Adrenal gland (tissue), 19 donors: ENCODE measurements at regions of chr14 and their contacts with region 1.

Region 1: GRCh38 chr14:102029956-102030355 is 56.9 kb downstream of the HSP90AA1 start:
- DNase-seq: no peak
- H3K4me3 ChIP-seq: no peak overlapping the region
- H3K27ac ChIP-seq: no peak overlapping the region
- H3K4me1 ChIP-seq: no peaks in the 10 kb centered on the region
- H3K27me3 ChIP-seq: no peaks in the 10 kb centered on the region
- CTCF ChIP-seq: no peak
- POLR2A ChIP-seq: no peak

Region 2: GRCh38 chr14:101980251-101981099 is 49.5 kb before region 1 on chr14:
- intact Hi-C with region 1: loop called in 1 of 2 experiments (anchors 10 kb)
- DNase-seq: peak; percentile 74 to 93 (median 90)
- H3K4me3 ChIP-seq: no peak overlapping the region
- H3K27ac ChIP-seq: peak overlapping the region; percentile 3 to 79 (median 24)
- H3K4me1 ChIP-seq: peaks cover 8 to 12% of the 10 kb centered on the region in 2 donors
- H3K27me3 ChIP-seq: no peaks in the 10 kb centered on the region
- CTCF ChIP-seq: no peak
- POLR2A ChIP-seq: peak in 1 of 2 donors; percentile 28

Region 3: GRCh38 chr14:102096214-102097114 is 66.5 kb after region 1 on chr14:
- intact Hi-C with region 1: no loop called
- DNase-seq: peak; percentile 82 to 95 (median 89)
- H3K4me3 ChIP-seq: no peak overlapping the region
- H3K27ac ChIP-seq: no peak overlapping the region
- H3K4me1 ChIP-seq: no peaks in the 10 kb centered on the region
- H3K27me3 ChIP-seq: no peaks in the 10 kb centered on the region
- CTCF ChIP-seq: peak; percentile 54 to 88 (median 83)
- POLR2A ChIP-seq: no peak